ENCODE measurements at regions of chr15 and their contacts with region 1.

Region 1: DNA sequence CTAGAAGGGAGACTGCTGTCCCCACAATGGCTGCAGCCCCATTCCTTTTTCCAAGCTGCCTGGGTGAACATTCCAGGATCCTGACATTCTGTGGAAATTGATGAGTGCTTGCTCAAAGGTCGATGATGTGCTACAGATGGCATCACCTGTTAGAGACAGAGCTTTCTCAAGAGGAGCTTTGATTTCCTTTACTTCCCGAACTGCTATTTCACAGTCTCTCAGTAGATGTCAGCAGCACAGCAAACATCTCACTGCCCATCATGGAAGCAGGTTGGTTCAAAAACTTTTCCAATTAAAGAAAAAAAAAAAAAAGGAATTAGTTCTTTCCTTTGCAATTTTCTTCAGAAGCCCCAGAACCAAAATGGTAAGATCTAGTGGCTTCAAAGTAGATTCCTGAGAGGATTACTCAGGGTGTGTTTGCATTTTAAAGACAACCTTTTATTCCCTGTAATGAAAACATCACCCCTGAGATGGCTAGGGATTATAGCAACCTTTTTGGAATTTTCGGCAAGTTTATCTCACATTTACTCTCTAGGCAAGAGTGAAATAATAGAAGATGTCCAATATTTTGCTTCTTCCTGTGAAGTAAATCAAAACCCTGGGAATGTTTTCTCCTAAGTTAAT is 44.8 kb downstream of the POLR2M start:
- DNase-seq: no peak
- ATAC-seq: peak in 6 of 8 donors; percentile 35 to 61 (median 51)
- H3K4me3 ChIP-seq: no peak overlapping the region
- H3K27ac ChIP-seq: no peak overlapping the region
- H3K4me1 ChIP-seq: peaks cover 0 to 13% (median 0%) of the 10 kb centered on the region in 9 donors
- H3K27me3 ChIP-seq: no peaks in the 10 kb centered on the region
- CTCF ChIP-seq: peak in 8 of 9 donors; percentile 48 to 77 (median 66)

Region 2: DNA sequence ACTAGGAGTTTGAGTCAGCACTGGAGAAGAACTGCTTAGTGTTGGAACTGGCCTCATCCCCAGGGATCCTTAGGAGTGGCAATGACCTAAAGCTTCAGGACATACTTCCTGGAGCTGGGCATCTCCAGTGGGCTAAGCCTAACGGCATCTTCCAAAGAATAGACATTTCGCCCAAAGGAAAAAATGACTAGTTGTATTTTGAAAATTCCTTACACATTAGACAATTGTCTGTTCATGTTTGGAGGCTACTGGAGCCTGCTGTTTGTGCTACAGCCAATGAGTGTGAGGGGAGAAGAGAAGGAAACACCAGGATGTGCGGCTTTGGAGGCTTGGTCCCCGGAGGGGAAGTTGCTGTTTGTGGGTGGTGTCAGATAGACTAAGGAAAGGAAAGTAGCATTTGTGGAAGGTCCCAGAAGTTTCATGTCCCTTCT is 32.8 kb after region 1 on chr15:
- intact Hi-C with region 1: loop called in 1 of 10 experiments (anchors 1 kb)
- DNase-seq: peak; percentile 25 to 62
- ATAC-seq: peak; percentile 73 to 95 (median 92)
- H3K4me3 ChIP-seq: peak overlapping the region in 1 of 10 donors; percentile 3
- H3K27ac ChIP-seq: peak overlapping the region in 9 of 10 donors; percentile 28 to 79 (median 68)
- H3K4me1 ChIP-seq: peaks cover 5 to 29% (median 19%) of the 10 kb centered on the region in 9 donors
- H3K27me3 ChIP-seq: no peaks in the 10 kb centered on the region
- CTCF ChIP-seq: no peak

Region 3: GRCh38 chr15:57797568-57798267 is 46.4 kb after region 1 on chr15:
- intact Hi-C with region 1: loop called in 1 of 10 experiments (anchors 2 kb)
- DNase-seq: no peak
- ATAC-seq: peak in 3 of 8 donors; percentile 34 to 52 (median 42)
- H3K4me3 ChIP-seq: no peak overlapping the region
- H3K27ac ChIP-seq: peak overlapping the region in 8 of 10 donors; percentile 9 to 67 (median 29)
- H3K4me1 ChIP-seq: peaks cover 0 to 26% (median 15%) of the 10 kb centered on the region in 9 donors
- H3K27me3 ChIP-seq: no peaks in the 10 kb centered on the region
- CTCF ChIP-seq: no peak

Region 4: DNA sequence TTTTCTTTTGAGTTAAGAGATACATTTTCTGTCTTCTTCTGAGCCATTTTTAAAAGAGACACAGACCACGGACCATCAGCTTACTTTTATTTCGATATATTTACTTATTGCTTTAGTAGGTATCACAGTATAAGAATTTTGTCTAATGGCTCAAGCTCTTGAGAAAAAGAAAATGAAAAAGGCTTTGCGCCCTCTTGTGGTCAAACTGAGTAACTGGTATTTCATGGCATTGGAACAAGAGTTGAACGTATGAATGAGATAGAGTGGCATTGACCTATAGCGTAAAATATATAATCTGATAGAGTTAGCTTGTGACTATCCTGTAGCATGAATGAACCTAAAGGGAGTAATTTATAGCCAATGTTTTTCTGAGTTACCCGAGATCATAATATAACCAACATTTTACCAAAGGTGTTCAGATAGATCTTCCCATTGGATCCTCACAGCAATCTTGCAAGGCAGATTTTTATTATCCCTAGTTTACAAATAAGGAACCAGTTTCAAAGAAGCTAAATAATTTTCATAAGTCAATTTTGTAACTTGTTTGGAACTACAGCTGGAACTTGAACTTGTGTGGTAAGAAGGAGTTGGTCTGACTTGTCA is 109.8 kb after region 1 on chr15:
- intact Hi-C with region 1: loop called in 9 of 10 experiments (anchors 2 to 5 kb)
- DNase-seq: peak in 1 of 2 donors; percentile 36
- ATAC-seq: peak in 6 of 8 donors; percentile 31 to 57 (median 48)
- H3K4me3 ChIP-seq: no peak overlapping the region
- H3K27ac ChIP-seq: no peak overlapping the region
- H3K4me1 ChIP-seq: peaks cover 0 to 9% (median 6%) of the 10 kb centered on the region in 9 donors
- H3K27me3 ChIP-seq: no peaks in the 10 kb centered on the region
- CTCF ChIP-seq: peak; percentile 76 to 91 (median 85)